Endothelial cell of umbilical vein (primary cell): ENCODE measurements at regions of chr6 and their contacts with region 1.

Region 1: GRCh38 chr6:35415065-35415991 is 36.8 kb upstream of the FANCE start:
- DNase-seq: peak; percentile 44
- H3K4me3 ChIP-seq: no peak overlapping the region
- H3K27ac ChIP-seq: no peak overlapping the region
- H3K4me1 ChIP-seq: peaks cover 13% of the 10 kb centered on the region
- H3K27me3 ChIP-seq: no peaks in the 10 kb centered on the region
- CTCF ChIP-seq: peak; percentile 5 to 36
- POLR2A ChIP-seq: no peak

Region 2: GRCh38 chr6:35435074-35435837 is 19.9 kb after region 1 on chr6:
- CTCF ChIA-PET with region 1: interaction called, 10 read pairs
- POLR2A ChIA-PET with region 1: no interaction called
- dilution Hi-C with region 1: no loop called
- intact Hi-C with region 1: no loop called
- DNase-seq: no peak
- H3K4me3 ChIP-seq: no peak overlapping the region
- H3K27ac ChIP-seq: no peak overlapping the region
- H3K4me1 ChIP-seq: no peaks in the 10 kb centered on the region
- H3K27me3 ChIP-seq: no peaks in the 10 kb centered on the region
- CTCF ChIP-seq: no peak
- POLR2A ChIP-seq: no peak